Activated naive CD4-positive, alpha-beta T cell treated with anti-CD3 and anti-CD28 coated beads for 36 hours (primary cell): ENCODE measurements at regions of chr4 and their contacts with region 1.

Region 1: DNA sequence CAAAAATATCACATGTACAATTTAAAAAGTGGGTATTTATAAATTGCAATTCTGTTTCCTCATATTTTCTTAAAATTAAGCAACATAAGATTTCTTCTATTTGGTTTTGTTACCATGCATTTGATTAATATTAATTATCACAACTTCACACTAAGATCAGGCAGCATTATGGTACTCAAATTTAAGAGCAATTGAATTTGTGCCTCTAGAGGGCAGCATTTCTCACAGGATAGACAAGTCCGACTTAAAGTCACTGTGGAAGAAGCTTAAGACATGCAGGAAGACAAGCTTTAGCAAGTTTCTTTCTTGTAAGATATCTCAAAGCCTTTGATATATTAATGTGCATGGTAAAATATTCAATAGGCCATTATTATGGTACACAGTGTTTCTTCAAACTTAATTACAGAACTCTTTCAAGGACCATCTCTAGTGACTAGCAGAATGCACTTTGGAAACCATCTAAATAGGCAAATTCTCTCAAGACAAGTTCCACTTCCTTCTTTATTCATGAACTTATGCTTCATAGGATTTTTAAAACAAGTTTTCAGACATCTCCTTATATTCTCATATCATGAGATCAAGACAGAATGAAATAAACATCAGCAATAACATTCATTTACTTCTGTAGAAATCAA is 35.0 kb downstream of the FBXW7 start:
- DNase-seq: peak; percentile 79
- H3K4me3 Mint-ChIP-seq: no peak overlapping the region
- H3K27ac Mint-ChIP-seq: no peak overlapping the region
- H3K4me1 Mint-ChIP-seq: peaks cover 15% of the 10 kb centered on the region
- H3K27me3 Mint-ChIP-seq: no peaks in the 10 kb centered on the region

Region 2: GRCh38 chr4:151766700-151767099 is 734.2 kb before region 1 on chr4:
- CTCF ChIA-PET with region 1: no interaction called
- intact Hi-C with region 1: no loop called
- DNase-seq: no peak
- H3K4me3 Mint-ChIP-seq: no peak overlapping the region
- H3K27ac Mint-ChIP-seq: no peak overlapping the region
- H3K4me1 Mint-ChIP-seq: no peaks in the 10 kb centered on the region
- H3K27me3 Mint-ChIP-seq: no peaks in the 10 kb centered on the region

Region 3: GRCh38 chr4:151905197-151905596 is 595.7 kb before region 1 on chr4:
- CTCF ChIA-PET with region 1: no interaction called
- intact Hi-C with region 1: no loop called
- DNase-seq: no peak
- H3K4me3 Mint-ChIP-seq: no peak overlapping the region
- H3K27ac Mint-ChIP-seq: no peak overlapping the region
- H3K4me1 Mint-ChIP-seq: no peaks in the 10 kb centered on the region
- H3K27me3 Mint-ChIP-seq: no peaks in the 10 kb centered on the region

Region 4: GRCh38 chr4:152408514-152409327 is 92.2 kb before region 1 on chr4:
- CTCF ChIA-PET with region 1: interaction called, 25 read pairs
- intact Hi-C with region 1: loop called (anchors 1 kb)
- DNase-seq: peak; percentile 35
- H3K4me3 Mint-ChIP-seq: no peak overlapping the region
- H3K27ac Mint-ChIP-seq: no peak overlapping the region
- H3K4me1 Mint-ChIP-seq: peaks cover 7% of the 10 kb centered on the region
- H3K27me3 Mint-ChIP-seq: no peaks in the 10 kb centered on the region

Region 5: DNA sequence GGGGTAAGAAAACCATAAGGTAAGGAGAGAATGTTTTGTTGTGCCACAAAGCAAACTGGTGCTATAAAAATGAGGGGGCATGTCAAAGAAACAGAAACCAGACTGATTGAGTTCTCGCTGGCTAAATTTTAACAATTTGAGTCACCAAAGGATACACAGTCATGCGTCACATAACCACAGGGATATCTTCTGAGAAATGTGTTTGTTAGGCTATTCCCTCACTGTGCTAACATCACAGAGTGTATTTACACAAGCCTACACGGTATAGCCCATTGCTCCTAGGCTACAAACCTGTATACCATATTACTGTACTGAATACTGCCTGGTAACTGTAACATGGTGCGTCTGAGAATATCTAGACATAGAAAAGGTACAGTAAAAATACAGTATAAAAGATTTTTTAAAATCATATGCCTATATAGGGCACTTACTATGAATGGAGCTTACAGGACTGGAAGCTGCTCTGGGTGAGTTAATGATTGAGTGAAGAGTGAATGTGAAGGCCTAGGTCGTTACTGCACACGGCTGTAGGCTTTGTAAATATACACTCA is 15.1 kb before region 1 on chr4:
- CTCF ChIA-PET with region 1: interaction called, 27 read pairs
- intact Hi-C with region 1: loop called (anchors 1 kb)
- DNase-seq: peak; percentile 49
- H3K4me3 Mint-ChIP-seq: no peak overlapping the region
- H3K27ac Mint-ChIP-seq: no peak overlapping the region
- H3K4me1 Mint-ChIP-seq: peaks cover 40% of the 10 kb centered on the region
- H3K27me3 Mint-ChIP-seq: no peaks in the 10 kb centered on the region

Region 6: DNA sequence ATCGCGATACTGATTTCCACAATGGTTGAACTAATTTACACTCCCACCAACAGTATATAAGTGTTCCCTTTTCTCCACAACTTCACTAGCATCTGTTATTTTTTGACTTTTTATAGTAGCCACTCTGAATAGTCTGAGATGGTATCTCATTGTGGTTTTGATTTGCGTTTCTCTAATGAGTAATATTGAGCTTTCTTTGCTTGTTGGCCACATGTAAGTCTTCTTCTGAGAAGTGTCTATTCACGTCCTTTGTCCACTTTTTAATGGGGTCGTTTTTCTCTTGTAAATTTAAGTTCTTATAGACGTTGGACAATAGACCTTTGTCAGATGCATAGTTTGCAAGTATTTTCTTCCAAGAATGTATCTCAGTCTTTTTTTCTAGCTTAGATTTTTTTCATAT is 25.0 kb after region 1 on chr4:
- CTCF ChIA-PET with region 1: interaction called, 23 read pairs
- intact Hi-C with region 1: no loop called
- DNase-seq: no peak
- H3K4me3 Mint-ChIP-seq: no peak overlapping the region
- H3K27ac Mint-ChIP-seq: no peak overlapping the region
- H3K4me1 Mint-ChIP-seq: peaks cover 59% of the 10 kb centered on the region
- H3K27me3 Mint-ChIP-seq: no peaks in the 10 kb centered on the region

Region 7: DNA sequence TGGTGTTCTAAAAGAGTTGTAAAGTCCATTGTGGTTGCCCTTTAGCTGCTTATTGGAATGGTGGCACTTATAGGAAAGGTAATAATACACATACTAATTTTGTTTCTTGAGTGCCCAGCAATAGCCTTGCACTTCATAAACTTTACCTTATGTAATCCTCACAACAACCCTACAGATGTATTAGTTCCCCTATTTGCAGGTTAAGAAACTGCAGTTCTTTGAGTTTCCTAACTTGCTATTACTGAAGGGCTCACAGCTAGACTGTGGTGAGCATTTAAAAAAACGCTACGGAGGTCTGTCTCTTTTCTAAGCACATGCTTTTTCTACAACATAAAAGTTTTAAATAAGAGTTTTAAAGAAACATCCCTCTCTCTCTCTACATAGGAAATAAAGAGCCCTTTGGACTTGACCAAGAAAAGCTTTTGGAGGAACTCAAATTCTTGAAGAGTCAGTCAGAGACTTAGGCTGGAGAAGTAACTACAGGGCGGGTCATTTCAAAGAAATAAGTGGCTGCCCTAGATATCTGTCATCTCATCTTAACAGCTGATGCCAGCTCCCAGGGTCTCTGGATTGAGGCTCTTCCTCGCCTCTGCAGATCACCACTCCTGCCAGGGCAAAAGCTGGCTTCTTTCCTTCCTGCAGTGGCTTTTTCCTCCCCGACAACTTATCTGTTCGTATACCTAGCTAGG is 76.9 kb after region 1 on chr4:
- CTCF ChIA-PET with region 1: interaction called, 10 read pairs
- intact Hi-C with region 1: no loop called
- DNase-seq: no peak
- H3K4me3 Mint-ChIP-seq: no peak overlapping the region
- H3K27ac Mint-ChIP-seq: no peak overlapping the region
- H3K4me1 Mint-ChIP-seq: no peaks in the 10 kb centered on the region
- H3K27me3 Mint-ChIP-seq: no peaks in the 10 kb centered on the region

Region 8: GRCh38 chr4:152679414-152680281 is 178.7 kb after region 1 on chr4 and contains the start of gene TMEM154:
- CTCF ChIA-PET with region 1: interaction called, 9 read pairs
- intact Hi-C with region 1: loop called (anchors 2 kb)
- DNase-seq: peak; percentile 83
- H3K4me3 Mint-ChIP-seq: peak within 1 kb of the TSS; percentile 87
- H3K27ac Mint-ChIP-seq: peak within 1 kb of the TSS; percentile 85
- H3K4me1 Mint-ChIP-seq: peaks cover 59% of the 10 kb centered on the region
- H3K27me3 Mint-ChIP-seq: no peaks in the 10 kb centered on the region
- total RNA-seq, gene TMEM154: 17.3 to 20.4 TPM

Region 9: GRCh38 chr4:153127760-153128494 is 627.0 kb after region 1 on chr4:
- CTCF ChIA-PET with region 1: no interaction called
- intact Hi-C with region 1: loop called (anchors 2 kb)
- DNase-seq: peak; percentile 95
- H3K4me3 Mint-ChIP-seq: no peak overlapping the region
- H3K27ac Mint-ChIP-seq: no peak overlapping the region
- H3K4me1 Mint-ChIP-seq: peaks cover 9% of the 10 kb centered on the region
- H3K27me3 Mint-ChIP-seq: no peaks in the 10 kb centered on the region